Heart right ventricle (tissue), 16 donors: ENCODE measurements at regions of chr15 and their contacts with region 1.

Region 1: GRCh38 chr15:68304589-68305337 is 27.2 kb downstream of the FEM1B start:
- DNase-seq: no peak
- ATAC-seq: no peak
- H3K4me3 ChIP-seq: no peak overlapping the region
- H3K27ac ChIP-seq: no peak overlapping the region
- H3K4me1 ChIP-seq: peaks cover under 1 to 26% (median 9%) of the 10 kb centered on the region in 9 donors
- H3K27me3 ChIP-seq: no peaks in the 10 kb centered on the region
- CTCF ChIP-seq: no peak

Region 2: DNA sequence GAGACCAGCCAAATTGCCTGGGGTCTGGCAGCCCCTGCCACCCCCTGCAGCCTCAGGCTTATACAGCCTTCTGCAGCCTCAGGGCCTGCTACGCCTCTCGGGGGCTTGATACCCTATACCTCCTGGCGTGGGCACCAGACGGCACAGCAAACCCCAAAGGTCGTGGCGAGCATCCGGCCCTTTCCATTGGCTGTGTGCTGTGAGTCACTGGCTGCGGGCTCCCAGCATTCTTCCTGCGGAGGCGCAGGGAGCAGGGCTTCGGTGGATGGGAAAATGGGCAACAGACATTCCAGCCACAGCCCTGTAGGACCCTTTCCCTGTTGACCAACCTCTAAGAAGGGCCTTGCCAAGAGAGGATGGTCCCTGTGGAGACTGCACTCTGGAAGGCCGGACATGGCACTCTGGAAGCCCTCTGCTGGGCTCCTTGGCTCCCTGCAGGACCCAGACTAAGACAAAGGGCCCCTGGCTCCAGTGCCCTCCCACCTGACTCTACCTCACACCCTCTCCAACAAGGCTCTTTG is 67.6 kb after region 1 on chr15:
- intact Hi-C with region 1: loop called in 3 of 10 experiments (anchors 2 kb)
- DNase-seq: peak in 1 of 2 donors; percentile 26
- ATAC-seq: peak; percentile 30 to 61 (median 58)
- H3K4me3 ChIP-seq: no peak overlapping the region
- H3K27ac ChIP-seq: no peak overlapping the region
- H3K4me1 ChIP-seq: peaks cover 10 to 46% (median 28%) of the 10 kb centered on the region in 9 donors
- H3K27me3 ChIP-seq: no peaks in the 10 kb centered on the region
- CTCF ChIP-seq: peak in 8 of 9 donors; percentile 35 to 66 (median 56)

Region 3: DNA sequence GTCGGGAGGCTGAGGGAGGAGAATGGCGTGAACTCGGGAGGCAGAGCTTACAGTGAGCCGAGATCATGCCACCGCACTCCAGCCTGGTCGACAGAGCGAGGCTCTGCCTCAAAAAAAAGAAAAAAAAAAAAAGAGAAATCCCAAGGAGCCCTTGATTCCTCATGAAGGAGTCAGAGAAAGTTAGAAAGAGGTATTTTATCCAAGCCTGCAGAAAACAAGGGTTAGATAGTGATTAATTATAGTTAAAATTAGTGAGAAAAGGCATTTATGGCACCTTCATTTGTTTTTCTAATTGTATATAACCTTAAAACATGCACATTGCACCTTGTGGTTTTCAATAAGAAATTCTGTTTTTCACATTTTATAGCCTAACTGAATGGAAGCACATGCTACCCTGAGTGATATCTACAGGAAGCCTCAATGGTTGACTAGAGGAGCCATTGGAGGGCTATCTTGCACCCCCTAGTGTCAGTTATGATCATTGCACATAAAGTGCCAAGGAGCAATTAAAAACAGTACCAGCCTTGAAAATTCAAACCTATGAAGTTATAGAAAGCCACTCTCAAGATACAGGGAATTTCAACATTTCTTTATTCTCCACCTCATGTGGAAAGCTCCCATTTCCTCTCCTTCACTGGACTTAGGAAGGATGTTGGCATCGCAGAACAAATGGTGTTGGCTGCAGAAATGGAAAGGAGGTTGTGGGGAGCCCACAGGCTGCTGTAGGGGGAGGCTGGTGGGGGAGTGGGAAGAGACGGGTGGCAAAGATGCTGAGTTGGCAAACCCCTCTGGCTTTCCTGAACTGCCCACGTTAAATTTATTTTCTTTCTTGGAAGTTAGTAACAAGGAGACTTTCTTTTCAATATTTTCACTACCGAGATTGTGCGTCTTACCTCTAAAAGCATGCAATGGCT is 78.7 kb after region 1 on chr15:
- intact Hi-C with region 1: loop called in 8 of 10 experiments (anchors 1 to 5 kb)
- DNase-seq: peak in 1 of 2 donors; percentile 46
- ATAC-seq: peak in 6 of 8 donors; percentile 50 to 72 (median 62)
- H3K4me3 ChIP-seq: no peak overlapping the region
- H3K27ac ChIP-seq: no peak overlapping the region
- H3K4me1 ChIP-seq: peaks cover 0 to 11% (median 0%) of the 10 kb centered on the region in 9 donors
- H3K27me3 ChIP-seq: peaks cover 0 to 5% (median 0%) of the 10 kb centered on the region in 7 donors
- CTCF ChIP-seq: peak; percentile 64 to 88 (median 81)

Region 4: GRCh38 chr15:68550481-68551295 is 245.9 kb after region 1 on chr15:
- intact Hi-C with region 1: loop called in 6 of 10 experiments (anchors 5 to 10 kb)
- DNase-seq: peak; percentile 67 to 72
- ATAC-seq: peak in 7 of 8 donors; percentile 34 to 56 (median 48)
- H3K4me3 ChIP-seq: no peak overlapping the region
- H3K27ac ChIP-seq: no peak overlapping the region
- H3K4me1 ChIP-seq: peaks cover 0 to 11% (median 0%) of the 10 kb centered on the region in 9 donors
- H3K27me3 ChIP-seq: no peaks in the 10 kb centered on the region
- CTCF ChIP-seq: peak; percentile 89 to 96 (median 94)

Region 5: DNA sequence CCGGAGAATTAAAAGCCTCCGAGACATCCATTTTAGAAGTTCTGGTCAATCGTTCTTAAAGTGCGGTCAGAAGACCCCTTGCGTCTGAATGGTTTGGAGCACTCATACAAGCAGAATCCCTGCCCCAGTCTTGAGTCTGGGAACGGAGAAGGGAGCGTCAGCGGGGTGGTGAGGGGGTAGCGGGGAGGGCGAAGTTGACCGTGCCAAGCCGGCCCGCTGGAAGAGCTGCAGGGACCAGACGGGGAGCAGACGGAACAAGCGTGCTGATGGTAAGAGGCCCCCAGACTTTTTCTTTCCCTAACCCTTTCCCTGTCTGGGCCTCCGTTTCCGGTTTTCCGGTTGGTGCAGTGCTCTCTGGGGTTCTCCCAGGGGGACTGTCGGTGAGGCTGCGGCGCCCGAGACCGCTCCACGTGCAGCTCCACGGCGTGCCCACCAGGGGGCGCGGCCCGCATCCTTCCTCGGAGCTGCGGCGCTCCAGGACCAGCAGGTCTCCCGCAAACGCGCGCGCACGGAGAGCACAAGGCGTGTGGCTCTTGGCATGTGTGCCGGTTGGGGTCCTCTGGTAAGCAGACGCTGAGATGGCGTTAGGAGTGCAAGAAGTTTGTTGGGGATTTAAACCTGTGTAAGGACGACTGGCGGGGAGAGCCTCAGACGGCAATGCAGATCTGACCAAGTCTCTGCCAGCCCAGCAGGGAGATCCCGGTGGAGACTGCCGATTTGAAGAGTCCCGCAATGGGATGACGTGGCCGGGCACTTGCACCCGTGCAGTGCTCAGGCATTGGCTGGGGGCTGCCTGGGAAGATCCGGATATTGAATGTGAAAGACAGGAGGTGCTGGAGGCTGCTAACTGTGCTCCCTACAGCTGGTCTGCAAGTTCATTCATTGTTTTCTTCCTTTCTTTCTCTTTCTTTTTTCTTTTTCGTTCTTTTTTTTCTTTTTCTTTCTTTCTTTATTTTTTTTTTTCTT is 254.9 kb after region 1 on chr15:
- intact Hi-C with region 1: loop called in 6 of 10 experiments (anchors 5 to 10 kb)
- DNase-seq: peak; percentile 76 to 86
- ATAC-seq: peak; percentile 92 to 98 (median 94)
- H3K4me3 ChIP-seq: peak overlapping the region in 9 of 10 donors; percentile 21 to 63 (median 50)
- H3K27ac ChIP-seq: peak overlapping the region in 3 of 10 donors; percentile 19 to 48 (median 44)
- H3K4me1 ChIP-seq: peaks cover 0 to 19% (median 7%) of the 10 kb centered on the region in 9 donors
- H3K27me3 ChIP-seq: peaks cover 0 to 23% (median 0%) of the 10 kb centered on the region in 7 donors
- CTCF ChIP-seq: peak; percentile 90 to 99 (median 98)

Region 6: DNA sequence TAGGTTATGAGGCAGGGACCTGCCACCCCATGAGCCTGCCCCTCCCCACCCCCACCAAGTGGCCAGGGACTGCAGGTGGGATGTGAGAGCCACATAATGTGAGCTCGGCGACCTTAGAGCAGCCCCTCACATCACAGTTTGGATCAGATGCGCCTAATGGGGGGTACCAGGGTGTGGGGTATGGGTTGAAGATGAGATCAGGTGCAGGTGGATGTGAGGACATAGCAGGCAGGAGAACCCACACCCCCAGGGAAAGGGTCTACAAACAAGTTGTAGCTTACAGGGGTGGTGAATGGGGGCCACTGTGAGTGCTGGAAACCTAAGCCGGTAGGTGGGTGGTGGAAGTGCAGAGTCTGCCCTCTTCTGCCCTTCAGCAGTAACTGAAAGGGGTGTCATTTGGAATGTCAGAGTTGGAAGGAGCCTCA is 368.0 kb after region 1 on chr15:
- intact Hi-C with region 1: loop called in 1 of 10 experiments (anchors 10 kb)
- DNase-seq: no peak
- ATAC-seq: peak in 1 of 8 donors; percentile 29
- H3K4me3 ChIP-seq: no peak overlapping the region
- H3K27ac ChIP-seq: no peak overlapping the region
- H3K4me1 ChIP-seq: peaks cover 4 to 28% (median 23%) of the 10 kb centered on the region in 9 donors
- H3K27me3 ChIP-seq: no peaks in the 10 kb centered on the region
- CTCF ChIP-seq: peak in 5 of 9 donors; percentile 11 to 32 (median 24)